ENCODE measurements at regions of chr1 and their contacts with region 1.

Region 1: DNA sequence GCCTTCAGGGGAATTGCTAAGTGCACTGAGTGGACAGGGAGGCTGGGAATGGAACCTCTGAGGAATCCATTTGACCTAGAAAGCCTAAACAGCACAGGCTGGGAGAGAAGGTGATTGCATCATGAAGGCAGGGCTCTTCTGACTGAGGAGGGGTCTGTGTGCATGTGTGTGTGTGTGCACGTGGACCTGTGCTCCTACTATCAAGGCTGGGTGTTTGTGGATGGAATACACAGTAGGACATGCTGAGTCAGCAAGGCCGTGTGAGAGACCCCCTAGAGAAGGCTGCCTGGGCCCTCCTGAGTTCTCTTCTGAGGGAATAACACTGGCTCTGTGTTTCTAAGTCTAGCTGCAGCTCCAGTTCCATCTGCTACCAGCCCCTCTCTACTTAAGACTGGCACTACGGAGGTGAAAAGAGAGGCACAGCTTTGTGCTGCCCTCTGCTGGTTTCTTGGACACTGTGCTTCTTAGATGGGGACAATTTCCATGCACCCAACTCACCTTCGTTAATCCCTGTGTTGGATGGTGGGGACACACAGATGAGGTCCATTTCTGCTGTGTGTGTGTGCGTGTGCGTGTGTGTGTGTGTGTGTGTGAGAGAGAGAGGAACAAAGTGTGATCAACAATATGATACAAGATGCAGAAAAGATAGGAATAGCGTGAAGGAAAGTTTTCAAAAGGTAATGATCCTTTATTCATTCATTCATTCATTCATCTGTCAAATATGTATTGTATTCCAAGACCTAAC is 6.2 kb upstream of the EFCAB14 start:
- DNase-seq: peak; percentile 58
- H3K4me3 ChIP-seq: no peak overlapping the region
- H3K27ac ChIP-seq: no peak overlapping the region
- H3K4me1 ChIP-seq: peaks cover 9% of the 10 kb centered on the region
- H3K27me3 ChIP-seq: no peaks in the 10 kb centered on the region
- CTCF ChIP-seq: peak; percentile 91 to 92

Region 2: GRCh38 chr1:46547481-46548383 is 177.4 kb before region 1 on chr1:
- CTCF ChIA-PET with region 1: no interaction called
- dilution Hi-C with region 1: no loop called
- in situ Hi-C with region 1: no loop called
- intact Hi-C with region 1: loop called (anchors 1 kb)
- DNase-seq: peak; percentile 35
- H3K4me3 ChIP-seq: no peak overlapping the region
- H3K27ac ChIP-seq: no peak overlapping the region
- H3K4me1 ChIP-seq: no peaks in the 10 kb centered on the region
- H3K27me3 ChIP-seq: peaks cover 20% of the 10 kb centered on the region
- CTCF ChIP-seq: peak; percentile 53 to 55

Region 3: GRCh38 chr1:46616277-46617107 is 108.7 kb before region 1 on chr1 and contains the start of gene MOB3C:
- CTCF ChIA-PET with region 1: interaction called, 3 read pairs
- dilution Hi-C with region 1: no loop called
- in situ Hi-C with region 1: loop called in 1 of 2 experiments (anchors 10 kb)
- intact Hi-C with region 1: no loop called
- DNase-seq: peak; percentile 66
- H3K4me3 ChIP-seq: peak within 1 kb of the TSS; percentile 80 to 85 (median 81)
- H3K27ac ChIP-seq: peak within 1 kb of the TSS; percentile 49
- H3K4me1 ChIP-seq: peaks cover 40% of the 10 kb centered on the region
- H3K27me3 ChIP-seq: no peaks in the 10 kb centered on the region
- CTCF ChIP-seq: no peak
- total RNA-seq, gene MOB3C: 10.2 to 12.8 TPM

Region 4: DNA sequence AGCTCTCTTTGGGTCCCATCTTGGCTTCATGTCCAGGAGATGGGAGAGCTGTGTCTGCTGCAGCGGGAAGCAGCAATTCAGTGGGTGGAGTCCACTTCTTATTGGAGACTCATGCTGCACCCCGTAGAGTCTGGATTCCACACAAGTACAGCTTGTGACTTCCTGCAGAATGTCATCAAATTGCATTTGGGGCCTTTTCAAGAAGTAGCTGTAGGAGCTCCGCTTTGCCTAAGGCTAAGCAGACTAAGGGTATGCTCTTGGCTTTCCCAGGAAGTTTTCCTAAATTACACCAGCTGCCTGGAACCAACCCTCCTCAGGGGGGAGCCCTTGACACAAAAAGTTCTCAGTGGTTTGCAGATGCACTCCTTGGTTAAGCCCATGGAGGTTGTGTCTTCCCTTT is 102.8 kb before region 1 on chr1:
- CTCF ChIA-PET with region 1: interaction called, 3 read pairs
- dilution Hi-C with region 1: no loop called
- in situ Hi-C with region 1: loop called in 1 of 2 experiments (anchors 10 kb)
- intact Hi-C with region 1: loop called (anchors 1 kb)
- DNase-seq: peak; percentile 40
- H3K4me3 ChIP-seq: no peak overlapping the region
- H3K27ac ChIP-seq: no peak overlapping the region
- H3K4me1 ChIP-seq: no peaks in the 10 kb centered on the region
- H3K27me3 ChIP-seq: no peaks in the 10 kb centered on the region
- CTCF ChIP-seq: peak; percentile 63 to 71

Region 5: GRCh38 chr1:46798810-46799209 is 73.6 kb after region 1 on chr1 and contains the start of gene CYP4B1:
- CTCF ChIA-PET with region 1: no interaction called
- dilution Hi-C with region 1: no loop called
- in situ Hi-C with region 1: no loop called
- intact Hi-C with region 1: no loop called
- DNase-seq: no peak
- H3K4me3 ChIP-seq: no peak within 1 kb of the TSS
- H3K27ac ChIP-seq: no peak within 1 kb of the TSS
- H3K4me1 ChIP-seq: no peaks in the 10 kb centered on the region
- H3K27me3 ChIP-seq: no peaks in the 10 kb centered on the region
- CTCF ChIP-seq: no peak
- total RNA-seq, gene CYP4B1: 0.17 to 0.52 TPM

Region 6: DNA sequence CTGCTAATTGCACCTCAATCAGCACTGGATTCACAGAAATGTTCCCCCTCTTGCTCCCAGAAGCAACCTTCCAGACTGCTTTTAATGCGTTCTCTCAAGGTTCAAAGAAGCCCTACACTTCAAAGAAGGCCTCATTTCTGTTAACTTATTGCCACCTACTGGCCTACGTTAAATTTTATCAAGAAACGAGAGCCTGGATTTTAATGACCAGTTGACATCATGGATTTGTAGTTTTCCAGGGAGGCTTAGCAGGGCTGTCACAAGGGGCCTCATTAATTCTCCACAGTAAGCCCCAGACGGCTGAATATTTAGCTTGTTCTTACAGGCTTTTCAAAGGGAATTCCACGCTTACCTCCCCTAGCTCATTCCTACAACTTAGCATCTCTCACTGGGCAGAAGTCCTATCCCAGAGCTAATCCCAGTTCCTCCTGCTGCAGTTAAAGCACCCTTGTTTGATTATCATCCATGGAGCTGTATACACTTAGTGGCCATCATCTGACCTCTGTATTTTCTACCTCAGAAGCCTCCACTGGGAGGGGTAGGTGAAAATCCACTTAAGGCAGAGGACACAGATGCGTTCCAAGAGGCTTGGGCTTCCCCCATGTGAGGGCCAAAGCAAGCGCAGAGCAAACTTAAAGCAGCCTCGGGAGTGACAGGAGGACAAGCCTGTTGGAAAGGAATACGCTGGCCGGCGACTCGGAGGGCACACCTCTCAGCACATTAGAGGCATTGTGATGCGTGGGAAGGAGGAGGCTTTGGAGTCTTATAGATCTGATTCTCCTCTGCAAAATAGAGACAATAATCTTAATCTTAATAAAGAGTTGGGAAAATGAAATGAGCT is 266.1 kb after region 1 on chr1:
- CTCF ChIA-PET with region 1: no interaction called
- dilution Hi-C with region 1: no loop called
- in situ Hi-C with region 1: loop called in 1 of 2 experiments (anchors 25 kb)
- intact Hi-C with region 1: no loop called
- DNase-seq: no peak
- H3K4me3 ChIP-seq: no peak overlapping the region
- H3K27ac ChIP-seq: no peak overlapping the region
- H3K4me1 ChIP-seq: no peaks in the 10 kb centered on the region
- H3K27me3 ChIP-seq: peaks cover 5% of the 10 kb centered on the region
- CTCF ChIP-seq: peak in 1 of 2 donors; percentile 54

Measured in mammary epithelial cell (primary cell).